Calu3 (cell line): ENCODE measurements at regions of chr14 and their contacts with region 1.

Region 1: GRCh38 chr14:91872517-91873470 is 5.5 kb upstream of the TC2N start:
- DNase-seq: peak; percentile 92
- H3K4me3 Mint-ChIP-seq: peak overlapping the region; percentile 56
- H3K27ac Mint-ChIP-seq: peak overlapping the region; percentile 98
- H3K4me1 Mint-ChIP-seq: peaks cover 57% of the 10 kb centered on the region
- H3K27me3 Mint-ChIP-seq: no peaks in the 10 kb centered on the region
- CTCF ChIP-seq: no peak

Region 2: GRCh38 chr14:91835197-91836118 is 37.3 kb before region 1 on chr14:
- CTCF ChIA-PET with region 1: no interaction called
- intact Hi-C with region 1: loop called (anchors 2 kb)
- DNase-seq: peak; percentile 25
- H3K4me3 Mint-ChIP-seq: peak overlapping the region; percentile 81
- H3K27ac Mint-ChIP-seq: peak overlapping the region; percentile 77
- H3K4me1 Mint-ChIP-seq: peaks cover 44% of the 10 kb centered on the region
- H3K27me3 Mint-ChIP-seq: no peaks in the 10 kb centered on the region
- CTCF ChIP-seq: no peak

Region 3: GRCh38 chr14:92254786-92255185 is 382.0 kb after region 1 on chr14:
- CTCF ChIA-PET with region 1: no interaction called
- intact Hi-C with region 1: no loop called
- DNase-seq: no peak
- H3K4me3 Mint-ChIP-seq: no peak overlapping the region
- H3K27ac Mint-ChIP-seq: no peak overlapping the region
- H3K4me1 Mint-ChIP-seq: no peaks in the 10 kb centered on the region
- H3K27me3 Mint-ChIP-seq: peaks cover 77% of the 10 kb centered on the region
- CTCF ChIP-seq: no peak